Activated CD4-positive, alpha-beta T cell treated with anti-CD3 and anti-CD28 coated beads, Interleukin-2, amount 10 ng/mL, durations not matched to agents 24 days and 14 days (primary cell): ENCODE measurements at regions of chr1 and their contacts with region 1.

Region 1: DNA sequence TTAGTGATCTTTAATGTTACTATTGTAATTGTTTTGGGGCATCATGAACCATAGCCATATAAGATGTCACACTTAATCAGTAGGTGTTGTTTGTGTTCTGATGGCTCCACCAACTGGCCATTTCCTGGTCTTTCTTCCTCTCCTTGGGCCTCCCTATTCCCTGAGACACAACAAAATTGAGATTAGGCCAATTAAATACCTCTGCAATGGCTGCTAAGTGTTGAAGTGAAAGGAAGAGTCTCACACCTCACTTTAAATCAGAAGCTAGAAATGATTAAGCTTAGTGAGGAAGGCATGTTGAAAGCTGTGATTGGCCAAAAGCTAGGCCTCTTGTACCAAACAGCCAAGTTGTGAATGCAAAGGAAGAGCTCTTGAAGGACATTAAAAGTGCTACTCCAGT is 30.7 kb downstream of the PPP2R5A start:
- DNase-seq: peak; percentile 62
- H3K4me3 Mint-ChIP-seq: no peak overlapping the region
- H3K27ac Mint-ChIP-seq: peak overlapping the region; percentile 76
- H3K4me1 Mint-ChIP-seq: peaks cover 20% of the 10 kb centered on the region
- H3K27me3 Mint-ChIP-seq: no peaks in the 10 kb centered on the region

Region 2: DNA sequence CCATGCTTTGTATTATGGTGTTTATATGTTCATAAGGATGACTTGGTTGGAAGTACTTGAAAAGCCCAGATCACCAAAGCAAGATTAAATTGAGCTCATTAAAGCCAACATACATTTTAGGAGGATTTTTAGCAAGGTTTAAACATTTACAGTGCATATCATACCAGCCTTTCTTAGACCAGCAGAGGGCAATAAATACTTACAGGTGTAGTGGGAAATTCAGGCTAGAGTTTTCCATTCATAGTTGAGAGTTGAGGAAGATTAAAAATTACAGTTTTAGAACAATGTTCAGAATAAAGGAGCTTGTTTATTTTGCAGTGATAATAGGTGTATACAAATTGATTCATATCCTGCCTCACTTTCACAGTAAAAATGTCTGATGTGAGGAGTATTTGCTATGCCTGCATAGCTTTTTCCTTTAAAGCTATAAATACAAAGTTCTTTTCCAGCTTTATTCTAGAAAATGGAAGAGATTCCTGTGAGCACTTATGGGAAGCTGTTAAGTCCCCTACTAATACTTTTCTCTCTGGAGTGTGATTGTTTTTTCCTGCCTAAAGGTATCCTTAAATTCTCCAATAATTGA is 245.1 kb before region 1 on chr1:
- intact Hi-C with region 1: loop called (anchors 1 kb)
- DNase-seq: no peak
- H3K4me3 Mint-ChIP-seq: no peak overlapping the region
- H3K27ac Mint-ChIP-seq: no peak overlapping the region
- H3K4me1 Mint-ChIP-seq: peaks cover 4% of the 10 kb centered on the region
- H3K27me3 Mint-ChIP-seq: no peaks in the 10 kb centered on the region

Region 3: DNA sequence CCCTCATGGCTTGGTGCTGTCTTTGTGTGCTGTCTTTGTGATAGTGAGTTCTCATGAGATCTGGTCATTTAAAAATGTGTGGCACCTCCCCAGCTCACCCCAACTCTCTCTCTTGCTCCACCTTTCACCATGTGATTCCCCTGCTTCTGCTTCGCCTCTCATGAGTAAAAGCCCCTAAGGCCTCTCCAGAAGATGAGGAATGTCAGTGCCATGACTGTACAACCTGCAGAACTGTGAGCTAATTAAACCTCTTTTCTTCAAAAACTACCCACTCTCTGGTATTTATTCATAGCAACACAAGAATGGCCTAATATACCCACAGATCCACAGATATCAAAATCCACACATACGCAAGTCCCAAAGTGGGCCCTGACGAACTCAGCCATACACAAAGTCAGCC is 119.6 kb before region 1 on chr1:
- intact Hi-C with region 1: no loop called
- DNase-seq: no peak
- H3K4me3 Mint-ChIP-seq: no peak overlapping the region
- H3K27ac Mint-ChIP-seq: no peak overlapping the region
- H3K4me1 Mint-ChIP-seq: peaks cover 7% of the 10 kb centered on the region
- H3K27me3 Mint-ChIP-seq: peaks cover 9% of the 10 kb centered on the region

Region 4: GRCh38 chr1:212256369-212256768 is 59.5 kb before region 1 on chr1:
- intact Hi-C with region 1: no loop called
- DNase-seq: peak; percentile 87
- H3K4me3 Mint-ChIP-seq: peak overlapping the region; percentile 69
- H3K27ac Mint-ChIP-seq: peak overlapping the region; percentile 87
- H3K4me1 Mint-ChIP-seq: peaks cover 51% of the 10 kb centered on the region
- H3K27me3 Mint-ChIP-seq: no peaks in the 10 kb centered on the region

Region 5: DNA sequence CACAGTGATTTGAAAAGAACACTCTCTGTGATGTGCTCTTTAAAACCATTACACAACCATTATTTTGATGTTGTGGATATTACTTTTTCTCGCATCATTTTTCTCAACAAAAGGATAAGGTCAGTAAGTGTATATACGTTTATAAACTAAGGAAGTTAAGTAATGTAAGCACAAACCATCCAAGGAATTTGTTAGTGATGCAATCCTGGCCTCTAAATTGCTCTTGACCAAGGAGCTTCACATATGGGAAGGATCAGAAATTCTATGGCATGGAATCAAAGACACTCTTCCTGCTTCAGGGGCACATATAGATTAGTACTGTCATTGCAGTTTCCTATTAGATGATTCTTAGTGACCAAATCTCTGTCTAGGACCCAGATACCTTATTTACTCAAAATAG is 34.3 kb before region 1 on chr1:
- intact Hi-C with region 1: no loop called
- DNase-seq: no peak
- H3K4me3 Mint-ChIP-seq: no peak overlapping the region
- H3K27ac Mint-ChIP-seq: no peak overlapping the region
- H3K4me1 Mint-ChIP-seq: peaks cover 11% of the 10 kb centered on the region
- H3K27me3 Mint-ChIP-seq: peaks cover 4% of the 10 kb centered on the region

Region 6: DNA sequence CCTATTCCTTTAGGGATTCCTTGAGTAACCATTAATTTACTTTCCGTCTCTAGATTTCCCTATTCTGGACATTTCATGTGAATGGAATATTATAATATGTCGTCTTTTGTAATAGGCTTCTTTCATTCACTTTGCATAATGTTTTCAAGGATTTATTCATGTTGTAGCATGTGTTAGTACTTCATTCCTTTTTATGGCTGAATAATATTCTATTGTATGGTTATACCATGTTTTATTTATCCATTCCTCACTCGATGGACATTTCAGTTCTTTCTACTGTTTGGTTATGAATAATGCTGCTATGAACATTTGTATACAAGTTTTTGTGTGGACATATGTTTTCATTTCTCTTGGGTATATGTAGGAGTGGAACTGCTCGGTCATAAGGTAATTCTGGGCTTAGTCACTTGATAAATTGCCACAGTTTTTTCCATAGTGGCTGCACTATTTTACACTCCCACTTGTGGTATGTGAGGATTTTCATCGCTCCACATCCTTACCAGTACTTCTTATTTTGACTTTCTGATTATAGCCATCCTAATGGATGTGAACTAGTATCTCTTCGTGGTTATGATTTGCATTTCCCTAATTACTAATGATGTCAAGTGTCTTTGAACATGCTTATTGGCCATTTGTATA is 13.0 kb before region 1 on chr1:
- intact Hi-C with region 1: loop called (anchors 1 kb)
- DNase-seq: no peak
- H3K4me3 Mint-ChIP-seq: no peak overlapping the region
- H3K27ac Mint-ChIP-seq: peak overlapping the region; percentile 32
- H3K4me1 Mint-ChIP-seq: peaks cover 33% of the 10 kb centered on the region
- H3K27me3 Mint-ChIP-seq: no peaks in the 10 kb centered on the region

Region 7: DNA sequence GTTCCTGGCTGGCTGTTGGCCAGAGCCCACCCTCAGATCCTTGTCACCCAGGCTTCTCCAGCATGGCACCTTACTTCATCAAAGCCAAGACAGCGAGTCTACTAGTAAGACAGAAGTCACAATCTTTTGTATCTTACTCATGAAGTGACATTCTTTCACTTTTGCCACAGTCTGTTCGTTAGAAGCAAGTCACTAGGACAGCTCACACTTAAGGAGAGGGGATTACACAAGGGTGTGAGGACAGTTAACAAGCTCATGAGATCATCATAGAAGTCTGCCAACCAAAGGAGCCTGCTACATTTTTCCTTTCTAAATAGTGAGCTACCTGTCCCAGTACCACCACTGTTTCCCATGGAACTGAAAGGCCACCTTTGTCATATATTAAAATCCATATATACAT is 37.3 kb after region 1 on chr1:
- intact Hi-C with region 1: no loop called
- DNase-seq: no peak
- H3K4me3 Mint-ChIP-seq: no peak overlapping the region
- H3K27ac Mint-ChIP-seq: peak overlapping the region; percentile 29
- H3K4me1 Mint-ChIP-seq: no peaks in the 10 kb centered on the region
- H3K27me3 Mint-ChIP-seq: no peaks in the 10 kb centered on the region